ENCODE measurements at regions of chr16 and their contacts with region 1.

Region 1: GRCh38 chr16:3099732-3100499 is 822 bp upstream of the ZSCAN10 start:
- DNase-seq: peak; percentile 96
- H3K4me3 Mint-ChIP-seq: peak overlapping the region; percentile 75
- H3K27ac Mint-ChIP-seq: peak overlapping the region; percentile 80
- H3K4me1 Mint-ChIP-seq: peaks cover 66% of the 10 kb centered on the region
- H3K27me3 Mint-ChIP-seq: no peaks in the 10 kb centered on the region

Region 2: DNA sequence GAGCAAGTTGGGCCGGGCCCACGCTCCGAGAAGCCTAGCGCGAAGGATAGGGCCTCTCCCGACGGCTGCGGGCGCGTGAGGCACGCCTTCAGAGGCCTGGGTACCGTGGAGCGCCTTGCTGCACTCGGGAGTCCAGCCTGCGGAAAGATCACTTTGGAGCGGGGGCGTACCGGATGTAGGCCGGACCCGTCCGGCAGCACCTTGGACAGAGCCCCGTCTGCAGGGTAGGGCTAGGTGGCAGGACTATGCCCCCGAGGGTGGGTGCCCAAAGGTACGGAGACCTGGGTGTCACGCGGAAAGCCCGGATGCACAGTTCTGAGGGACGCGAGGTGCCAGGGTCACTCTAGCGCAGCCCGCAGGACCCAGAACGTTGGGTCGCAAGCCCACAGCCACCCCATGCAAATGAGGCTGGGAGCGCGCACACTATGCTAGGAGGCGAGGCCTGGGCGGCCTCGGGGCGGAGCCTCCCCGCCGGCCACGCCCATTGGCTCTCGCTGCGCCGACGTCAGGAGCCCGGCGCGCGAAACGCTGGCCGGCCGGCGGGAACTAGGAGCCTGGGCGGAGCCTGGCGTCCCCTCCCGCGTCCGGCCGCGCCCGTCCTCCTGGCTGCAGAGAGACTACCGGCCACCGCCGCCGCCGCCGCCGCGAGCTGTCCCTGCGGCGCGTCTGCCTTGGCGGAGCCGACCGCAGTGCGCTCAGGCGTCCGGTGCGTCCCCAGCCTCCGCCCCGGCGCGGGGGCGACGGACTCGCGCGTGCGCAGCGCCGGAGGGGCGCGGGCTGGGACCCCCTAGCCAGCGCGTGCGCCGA is 131.0 kb before region 1 on chr16 and contains the start of gene PAQR4:
- CTCF ChIA-PET with region 1: no interaction called
- POLR2A ChIA-PET with region 1: no interaction called
- DNase-seq: peak; percentile 88
- H3K4me3 Mint-ChIP-seq: peak within 1 kb of the TSS; percentile 76
- H3K27ac Mint-ChIP-seq: peak within 1 kb of the TSS; percentile 71
- H3K4me1 Mint-ChIP-seq: peaks cover 42% of the 10 kb centered on the region
- H3K27me3 Mint-ChIP-seq: peaks cover 23% of the 10 kb centered on the region
- total RNA-seq, gene PAQR4: 50.0 to 52.3 TPM

Region 3: GRCh38 chr16:2980227-2981086 is 119.5 kb before region 1 on chr16 and contains the start of gene PKMYT1:
- CTCF ChIA-PET with region 1: no interaction called
- POLR2A ChIA-PET with region 1: no interaction called
- DNase-seq: peak; percentile 95
- H3K4me3 Mint-ChIP-seq: peak within 1 kb of the TSS; percentile 88
- H3K27ac Mint-ChIP-seq: peak within 1 kb of the TSS; percentile 80
- H3K4me1 Mint-ChIP-seq: peaks cover 41% of the 10 kb centered on the region
- H3K27me3 Mint-ChIP-seq: peaks cover 2% of the 10 kb centered on the region
- total RNA-seq, gene PKMYT1: 118 to 124 TPM

Region 4: DNA sequence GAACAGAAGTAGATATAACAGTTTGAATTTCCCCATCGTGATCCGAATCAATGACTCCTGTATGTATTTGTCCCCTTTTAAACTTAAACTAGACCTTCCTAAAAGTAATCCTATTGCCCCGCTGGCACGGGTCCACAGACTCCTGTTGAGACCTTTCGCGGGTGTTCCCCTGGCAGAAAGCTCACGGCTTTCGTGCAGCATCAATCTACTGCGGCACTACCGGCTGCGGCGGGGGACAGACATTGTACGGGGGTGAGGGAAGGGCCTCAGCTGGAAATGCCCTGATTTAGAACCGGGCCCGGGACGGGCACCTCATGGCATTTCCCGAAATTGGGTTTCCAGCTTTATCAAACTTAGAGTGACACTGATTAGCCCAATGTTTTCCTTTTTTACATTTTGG is 19.9 kb before region 1 on chr16:
- CTCF ChIA-PET with region 1: interaction called, 26 read pairs
- POLR2A ChIA-PET with region 1: interaction called, 84 read pairs
- DNase-seq: no peak
- H3K4me3 Mint-ChIP-seq: no peak overlapping the region
- H3K27ac Mint-ChIP-seq: peak overlapping the region; percentile 9
- H3K4me1 Mint-ChIP-seq: peaks cover 63% of the 10 kb centered on the region
- H3K27me3 Mint-ChIP-seq: no peaks in the 10 kb centered on the region

Region 5: DNA sequence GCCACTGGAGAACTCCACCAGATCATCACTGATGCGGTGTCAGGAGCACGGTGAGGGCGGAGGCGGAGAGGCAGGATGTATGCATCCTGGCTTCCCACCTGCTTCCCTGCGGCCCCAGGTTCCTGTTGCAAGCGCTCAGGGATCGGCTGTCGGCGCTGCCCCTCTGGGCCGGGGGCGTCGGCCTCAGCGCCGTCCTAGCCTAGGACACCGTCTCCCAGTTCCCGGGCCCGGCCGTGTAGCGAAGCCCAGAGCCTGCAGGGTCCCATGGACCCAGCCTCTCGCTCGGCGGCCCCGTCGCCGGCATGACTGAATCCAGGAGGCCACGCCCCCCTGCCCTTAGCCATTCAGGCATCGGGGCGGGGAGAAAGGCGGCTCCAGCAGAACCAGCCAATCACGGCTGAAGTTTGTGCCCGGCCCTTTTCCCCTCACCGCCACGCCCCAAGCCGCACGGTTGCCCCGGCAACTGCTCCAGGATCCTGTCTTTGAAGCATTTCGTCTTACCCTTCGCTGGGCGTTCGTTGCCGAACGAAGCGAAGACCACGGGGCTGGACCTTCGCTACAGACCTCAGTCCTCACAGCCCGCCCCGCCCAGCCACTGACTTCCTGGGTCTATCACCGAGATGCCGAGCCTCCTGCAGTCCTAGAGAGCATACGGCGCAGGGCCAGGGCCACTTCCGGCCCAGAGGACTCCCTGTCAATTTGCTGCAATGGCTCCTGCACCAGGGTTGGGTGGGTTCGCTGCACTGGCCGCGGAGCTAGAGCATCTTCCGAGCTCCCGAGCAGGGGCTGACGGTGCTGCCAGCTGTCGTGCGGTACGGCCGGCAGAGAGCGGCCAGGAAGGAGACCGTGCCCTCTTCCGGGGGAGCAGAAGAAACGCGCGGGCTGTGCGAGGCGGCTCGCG is 24.3 kb after region 1 on chr16:
- CTCF ChIA-PET with region 1: interaction called, 254 read pairs
- POLR2A ChIA-PET with region 1: interaction called, 13 read pairs
- DNase-seq: peak; percentile 98
- H3K4me3 Mint-ChIP-seq: peak overlapping the region; percentile 88
- H3K27ac Mint-ChIP-seq: peak overlapping the region; percentile 98
- H3K4me1 Mint-ChIP-seq: peaks cover 48% of the 10 kb centered on the region
- H3K27me3 Mint-ChIP-seq: no peaks in the 10 kb centered on the region

Region 6: DNA sequence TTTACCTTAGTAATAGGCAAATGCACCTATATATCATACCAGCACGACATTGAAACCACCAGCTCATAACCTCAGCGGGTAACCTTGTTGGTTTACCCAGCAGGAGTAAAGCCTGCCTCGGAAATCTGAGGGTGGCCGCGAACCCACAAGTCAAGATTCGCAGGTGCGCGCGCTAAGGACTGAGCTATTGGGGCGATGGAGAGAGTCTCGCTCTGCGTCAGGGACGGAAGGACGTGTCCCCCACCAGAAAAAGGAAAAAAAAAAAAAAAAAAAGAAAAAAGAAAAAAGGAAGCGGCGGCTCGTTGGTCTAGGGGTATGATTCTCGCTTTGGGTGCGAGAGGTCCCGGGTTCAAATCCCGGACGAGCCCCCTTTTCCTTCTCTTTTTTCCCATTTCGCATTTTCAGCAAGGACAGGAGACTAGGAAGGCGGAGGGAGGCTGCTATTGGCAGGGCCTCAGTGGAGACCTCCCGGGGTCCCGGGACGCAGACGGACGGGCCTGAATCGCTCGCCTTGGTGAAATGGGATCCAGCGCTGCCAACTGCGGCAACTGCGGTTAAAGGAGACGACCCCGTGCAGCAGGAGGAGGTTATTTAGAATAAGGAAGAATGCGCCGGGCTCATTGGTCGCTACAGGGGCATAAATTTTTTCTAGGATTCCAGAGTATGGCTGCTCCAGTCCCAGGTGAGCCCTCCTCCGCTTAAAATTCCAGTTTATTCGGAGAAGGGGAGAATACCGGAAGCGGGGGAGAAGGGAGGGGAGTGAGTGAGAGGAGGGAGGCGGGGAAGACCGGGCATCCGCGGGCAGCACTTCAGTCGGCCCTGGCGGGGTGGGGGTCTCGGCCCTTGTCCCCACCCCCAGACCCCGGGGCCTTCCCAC is 88.1 kb after region 1 on chr16 and contains the start of gene OR1F1:
- CTCF ChIA-PET with region 1: no interaction called
- POLR2A ChIA-PET with region 1: no interaction called
- DNase-seq: peak; percentile 76
- H3K4me3 Mint-ChIP-seq: peak within 1 kb of the TSS; percentile 71
- H3K27ac Mint-ChIP-seq: peak within 1 kb of the TSS; percentile 78
- H3K4me1 Mint-ChIP-seq: peaks cover 62% of the 10 kb centered on the region
- H3K27me3 Mint-ChIP-seq: peaks cover 70% of the 10 kb centered on the region
- total RNA-seq, gene OR1F1: not detected

Region 7: GRCh38 chr16:3198334-3199072 is 98.6 kb after region 1 on chr16:
- CTCF ChIA-PET with region 1: no interaction called
- POLR2A ChIA-PET with region 1: no interaction called
- DNase-seq: no peak
- H3K4me3 Mint-ChIP-seq: no peak overlapping the region
- H3K27ac Mint-ChIP-seq: no peak overlapping the region
- H3K4me1 Mint-ChIP-seq: no peaks in the 10 kb centered on the region
- H3K27me3 Mint-ChIP-seq: peaks cover 28% of the 10 kb centered on the region

Measured in activated CD4-positive, alpha-beta memory T cell treated with anti-CD3 and anti-CD28 coated beads, Interleukin-2, amount 10 ng/mL, durations not matched to agents 7 days and 5 days (primary cell).